Activated CD4-positive, alpha-beta T cell treated with anti-CD3 and anti-CD28 coated beads, Interleukin-2, amount 10 ng/mL, durations not matched to agents 24 days and 14 days (primary cell): ENCODE measurements at regions of chr7 and their contacts with region 1.

Region 1: DNA sequence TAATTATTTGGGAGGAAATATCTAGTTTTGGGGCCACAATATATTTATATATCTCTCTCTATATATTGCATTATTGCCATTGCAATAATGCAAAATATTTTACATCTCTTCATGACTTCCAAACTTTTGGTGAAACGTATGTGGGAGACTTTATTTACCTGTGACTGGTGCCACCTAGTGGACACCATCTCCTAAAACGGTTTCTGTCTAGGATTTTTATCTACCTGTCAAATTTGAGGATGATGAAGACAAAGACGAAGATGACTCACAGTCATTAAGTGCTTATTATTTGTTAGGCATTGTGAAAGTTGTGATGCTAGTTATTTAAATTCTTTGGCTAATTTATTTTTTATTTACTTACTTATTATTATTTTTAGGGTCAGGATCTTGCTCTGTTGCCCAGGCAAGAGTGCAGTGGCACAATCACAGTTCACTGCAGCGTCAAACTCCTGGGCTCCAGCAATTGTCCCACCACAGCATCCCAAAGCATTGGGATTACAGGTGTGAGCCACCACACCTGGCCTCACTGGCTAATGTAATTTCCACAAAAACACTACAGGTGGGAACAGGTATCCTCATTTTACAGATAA is 18.7 kb upstream of the CBLL1 start:
- DNase-seq: peak; percentile 84
- H3K4me3 Mint-ChIP-seq: no peak overlapping the region
- H3K27ac Mint-ChIP-seq: no peak overlapping the region
- H3K4me1 Mint-ChIP-seq: no peaks in the 10 kb centered on the region
- H3K27me3 Mint-ChIP-seq: peaks cover 30% of the 10 kb centered on the region

Region 2: GRCh38 chr7:106793015-106793975 is 932.0 kb before region 1 on chr7:
- intact Hi-C with region 1: loop called (anchors 10 kb)
- DNase-seq: peak; percentile 77
- H3K4me3 Mint-ChIP-seq: no peak overlapping the region
- H3K27ac Mint-ChIP-seq: no peak overlapping the region
- H3K4me1 Mint-ChIP-seq: peaks cover 3% of the 10 kb centered on the region
- H3K27me3 Mint-ChIP-seq: peaks cover 10% of the 10 kb centered on the region

Region 3: GRCh38 chr7:107201795-107202450 is 523.3 kb before region 1 on chr7:
- intact Hi-C with region 1: loop called (anchors 10 kb)
- DNase-seq: peak; percentile 72
- H3K4me3 Mint-ChIP-seq: no peak overlapping the region
- H3K27ac Mint-ChIP-seq: no peak overlapping the region
- H3K4me1 Mint-ChIP-seq: no peaks in the 10 kb centered on the region
- H3K27me3 Mint-ChIP-seq: no peaks in the 10 kb centered on the region

Region 4: DNA sequence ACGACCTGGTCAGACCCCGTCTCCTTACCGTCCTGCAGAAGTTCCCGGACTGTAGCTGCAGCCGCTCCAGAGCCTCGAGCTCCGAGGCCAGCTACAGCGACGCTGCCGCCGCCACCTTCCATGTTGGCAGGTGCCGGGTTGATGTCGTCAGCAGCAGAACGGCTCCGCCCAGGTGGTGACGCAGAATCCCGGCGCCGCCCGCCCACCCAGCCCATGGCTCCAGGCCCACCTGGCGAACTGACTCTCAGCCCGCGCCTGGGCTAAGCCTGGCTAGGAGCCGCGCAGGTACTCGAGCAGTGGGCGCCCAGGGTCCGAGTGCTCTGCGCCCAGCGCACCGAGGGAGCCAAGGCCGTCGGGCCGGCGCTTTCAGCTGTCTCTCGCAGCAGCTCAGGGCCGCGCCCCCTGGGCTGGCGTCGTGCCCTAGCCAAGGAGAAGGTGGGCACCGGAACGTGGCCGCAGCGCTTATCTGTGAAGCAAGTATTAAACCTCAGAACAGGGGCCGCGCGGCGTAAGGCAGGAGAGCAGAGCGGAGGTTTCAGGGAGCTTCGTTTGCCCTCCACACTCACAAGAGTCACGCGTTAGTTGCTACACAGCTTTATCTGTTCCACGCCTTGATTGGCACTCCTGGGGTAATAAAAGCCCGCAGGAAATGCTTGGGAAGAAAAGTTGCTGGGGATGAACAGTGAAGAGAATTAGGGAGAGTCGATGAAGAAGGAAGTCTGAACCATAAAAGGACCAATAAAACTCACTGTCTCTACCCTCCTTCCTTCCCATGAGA is 161.3 kb before region 1 on chr7 and contains the starts of genes COG5 and DUS4L:
- intact Hi-C with region 1: loop called (anchors 5 kb)
- DNase-seq: peak; percentile 95
- H3K4me3 Mint-ChIP-seq: peak within 1 kb of the TSS; percentile 85
- H3K27ac Mint-ChIP-seq: peak within 1 kb of the TSS; percentile 85
- H3K4me1 Mint-ChIP-seq: peaks cover 50% of the 10 kb centered on the region
- H3K27me3 Mint-ChIP-seq: no peaks in the 10 kb centered on the region
- total RNA-seq, gene COG5: 40.9 and 43.3 TPM in 2 replicates
- total RNA-seq, gene DUS4L: 12.9 and 14.9 TPM in 2 replicates

Region 5: DNA sequence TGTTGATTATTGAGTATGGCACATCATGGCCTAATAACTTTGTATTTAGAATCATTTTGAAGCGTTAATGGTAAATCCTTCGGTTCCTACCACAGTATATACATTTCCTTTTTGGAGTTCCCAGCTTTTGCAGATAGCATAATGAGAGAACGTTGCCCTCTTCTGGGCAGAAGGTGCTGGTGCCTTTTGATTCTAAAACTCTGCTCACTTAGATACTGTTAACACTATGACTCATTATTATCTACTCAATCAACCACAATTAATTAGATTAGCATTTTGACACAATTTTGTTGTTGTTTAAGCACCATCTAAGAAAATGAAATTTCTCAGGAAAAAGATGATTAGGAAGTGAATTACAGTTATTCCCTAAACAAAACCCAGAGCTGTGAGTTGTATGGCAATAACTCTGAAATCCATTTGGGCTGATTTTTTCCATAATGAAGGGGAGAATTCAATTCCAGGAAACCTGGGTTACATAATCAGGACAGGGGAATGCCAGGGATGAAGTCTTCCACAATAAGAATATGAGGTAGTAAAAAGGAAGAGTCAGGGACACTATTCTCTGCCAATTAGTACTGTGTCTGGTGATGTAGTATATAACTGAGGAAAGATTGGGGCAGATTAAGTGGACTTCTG is 154.3 kb after region 1 on chr7:
- intact Hi-C with region 1: loop called (anchors 5 kb)
- DNase-seq: peak; percentile 79
- H3K4me3 Mint-ChIP-seq: no peak overlapping the region
- H3K27ac Mint-ChIP-seq: no peak overlapping the region
- H3K4me1 Mint-ChIP-seq: peaks cover 15% of the 10 kb centered on the region
- H3K27me3 Mint-ChIP-seq: peaks cover 21% of the 10 kb centered on the region